Endothelial cell of umbilical vein (primary cell): ENCODE measurements at regions of chr2 and their contacts with region 1.

Region 1: GRCh38 chr2:99141110-99142108 is at the start of gene C2orf15:
- DNase-seq: peak; percentile 84
- H3K4me3 ChIP-seq: peak within 1 kb of the TSS; percentile 66 to 79 (median 68)
- H3K27ac ChIP-seq: no peak within 1 kb of the TSS
- H3K4me1 ChIP-seq: peaks cover 7% of the 10 kb centered on the region
- H3K27me3 ChIP-seq: peaks cover 21 to 31% of the 10 kb centered on the region in 2 experiments
- CTCF ChIP-seq: no peak
- POLR2A ChIP-seq: peak; percentile 1
- total RNA-seq, gene C2orf15: not detected in 2 replicates

Region 2: GRCh38 chr2:99154643-99155536 is 13.5 kb after region 1 on chr2 and contains the starts of genes LIPT1 and TSGA10:
- CTCF ChIA-PET with region 1: interaction called, 6 read pairs
- POLR2A ChIA-PET with region 1: no interaction called
- dilution Hi-C with region 1: no loop called
- intact Hi-C with region 1: loop called (anchors 1 kb)
- DNase-seq: peak; percentile 90
- H3K4me3 ChIP-seq: peak within 1 kb of the TSS; percentile 92 to 99 (median 98)
- H3K27ac ChIP-seq: peak within 1 kb of the TSS; percentile 83
- H3K4me1 ChIP-seq: peaks cover 10% of the 10 kb centered on the region
- H3K27me3 ChIP-seq: no peaks in the 10 kb centered on the region
- CTCF ChIP-seq: peak in 1 of 2 donors; percentile 2
- POLR2A ChIP-seq: peak; percentile 72
- total RNA-seq, gene LIPT1: 4.8 and 5.3 TPM in 2 replicates
- total RNA-seq, gene TSGA10: 0.51 and 2.7 TPM in 2 replicates

Region 3: GRCh38 chr2:99180755-99181623 is 39.6 kb after region 1 on chr2 and contains the starts of genes MITD1 and MRPL30:
- CTCF ChIA-PET with region 1: interaction called, 3 read pairs
- POLR2A ChIA-PET with region 1: interaction called, 3 read pairs
- dilution Hi-C with region 1: no loop called
- intact Hi-C with region 1: loop called (anchors 1 kb)
- DNase-seq: peak; percentile 99
- H3K4me3 ChIP-seq: peak within 1 kb of the TSS; percentile 67 to 93 (median 74)
- H3K27ac ChIP-seq: peak within 1 kb of the TSS; percentile 48
- H3K4me1 ChIP-seq: peaks cover 17% of the 10 kb centered on the region
- H3K27me3 ChIP-seq: no peaks in the 10 kb centered on the region
- CTCF ChIP-seq: no peak
- POLR2A ChIP-seq: peak; percentile 80
- total RNA-seq, gene MITD1: 29.8 and 30.0 TPM in 2 replicates
- total RNA-seq, gene MRPL30: 28.4 and 30.7 TPM in 2 replicates

Region 4: DNA sequence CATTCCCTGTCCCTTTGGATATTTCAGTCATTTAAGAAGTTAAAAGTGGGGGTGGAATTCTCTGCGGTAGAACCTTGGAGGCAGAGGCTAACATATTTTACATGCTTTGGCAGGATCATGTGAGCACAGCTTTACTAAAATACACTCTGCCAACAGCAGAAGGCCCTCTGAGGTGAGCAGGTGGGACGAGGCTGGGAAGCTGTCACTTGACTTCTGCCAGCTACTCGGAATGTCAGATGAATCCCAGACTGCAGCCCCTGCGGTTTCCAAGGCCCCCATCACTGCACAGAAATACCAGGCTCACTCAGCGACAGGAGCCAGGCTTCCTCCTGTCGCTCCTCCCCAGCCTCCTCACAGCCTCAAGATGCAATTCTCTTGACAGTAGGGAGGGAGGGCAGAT is 569.3 kb after region 1 on chr2:
- CTCF ChIA-PET with region 1: no interaction called
- POLR2A ChIA-PET with region 1: no interaction called
- dilution Hi-C with region 1: no loop called
- intact Hi-C with region 1: no loop called
- DNase-seq: no peak
- H3K4me3 ChIP-seq: no peak overlapping the region
- H3K27ac ChIP-seq: no peak overlapping the region
- H3K4me1 ChIP-seq: no peaks in the 10 kb centered on the region
- H3K27me3 ChIP-seq: no peaks in the 10 kb centered on the region
- CTCF ChIP-seq: no peak
- POLR2A ChIP-seq: no peak